Colonic mucosa (tissue), 4 donors: ENCODE measurements at regions of chr4 and their contacts with region 1.

Region 1: GRCh38 chr4:121736735-121737351 is 28.1 kb downstream of the SMIM43 start:
- DNase-seq: peak; percentile 25
- H3K4me3 ChIP-seq: no peak overlapping the region
- H3K27ac ChIP-seq: no peak overlapping the region
- H3K4me1 ChIP-seq: no peaks in the 10 kb centered on the region
- H3K27me3 ChIP-seq: no peaks in the 10 kb centered on the region
- CTCF ChIP-seq: peak; percentile 26

Region 2: GRCh38 chr4:121484633-121485032 is 252.2 kb before region 1 on chr4:
- intact Hi-C with region 1: loop called (anchors 10 kb)
- DNase-seq: no peak
- H3K4me3 ChIP-seq: no peak overlapping the region
- H3K27ac ChIP-seq: no peak overlapping the region
- H3K4me1 ChIP-seq: no peaks in the 10 kb centered on the region
- H3K27me3 ChIP-seq: no peaks in the 10 kb centered on the region
- CTCF ChIP-seq: peak; percentile 37